HEK293T (cell line): ENCODE measurements at regions of chr12 and their contacts with region 1.

Region 1: DNA sequence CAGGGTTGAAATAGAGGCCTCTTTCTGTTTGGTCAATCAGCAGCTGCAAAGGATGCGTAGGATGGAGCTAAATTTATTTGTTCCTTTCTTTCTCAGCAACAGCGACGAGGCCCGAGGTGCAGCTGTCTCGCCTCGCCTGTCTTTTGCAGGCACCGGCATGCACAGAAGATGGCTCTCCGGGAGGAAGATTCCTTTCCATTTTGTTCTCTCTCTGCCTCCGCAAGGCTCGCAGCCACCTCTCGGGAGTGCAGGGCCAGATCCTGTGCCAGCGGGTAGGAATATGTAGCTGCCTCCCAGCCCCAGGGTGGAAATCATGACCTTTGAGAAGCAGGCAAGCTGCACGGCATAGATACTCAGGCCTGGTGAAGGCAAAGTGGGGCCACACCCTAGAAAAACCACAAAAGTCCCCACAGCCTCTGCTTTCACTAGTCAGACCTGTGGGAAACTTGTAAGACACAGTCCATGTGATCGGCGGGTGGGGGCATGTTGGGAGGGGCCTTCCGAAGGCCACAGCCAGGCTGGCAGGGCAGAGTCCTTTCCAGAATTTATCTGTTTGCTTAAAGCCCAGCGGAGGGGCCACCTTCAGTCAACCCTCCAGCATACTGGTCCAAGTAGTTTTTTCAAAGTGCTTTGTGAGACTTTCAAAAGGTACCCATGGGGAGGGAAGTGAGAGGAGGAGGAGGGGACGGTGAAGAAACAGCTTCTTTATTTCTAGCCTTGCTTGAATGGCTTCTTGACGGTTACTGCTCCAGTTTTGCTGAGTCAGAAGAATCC is at the start of gene MAP1LC3B2:
- DNase-seq: no peak

Region 2: DNA sequence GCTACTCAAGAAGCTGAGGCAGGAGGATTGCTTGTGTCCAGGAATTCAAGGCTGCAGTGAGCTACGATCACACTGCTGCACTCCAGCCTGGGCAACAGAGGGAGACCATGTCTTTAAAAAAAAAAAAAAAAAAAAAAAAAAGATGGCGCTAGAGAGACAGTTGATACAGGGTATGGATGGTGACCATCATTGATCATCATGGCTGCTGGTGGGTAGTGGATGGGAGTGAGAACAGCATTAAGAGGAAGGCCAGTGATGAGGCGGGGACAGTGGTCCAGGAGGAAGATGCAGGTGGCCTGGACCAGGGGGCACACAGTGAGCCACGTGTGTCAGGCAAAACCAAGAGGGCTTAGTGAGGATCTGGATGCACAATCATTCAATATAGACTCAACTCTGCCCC is 26.9 kb before region 1 on chr12:
- CTCF ChIA-PET with region 1: interaction called, 10 read pairs
- POLR2A ChIA-PET with region 1: interaction called, 3 read pairs
- DNase-seq: no peak